HCT116 (cell line): ENCODE measurements at regions of chr2 and their contacts with region 1.

Region 1: DNA sequence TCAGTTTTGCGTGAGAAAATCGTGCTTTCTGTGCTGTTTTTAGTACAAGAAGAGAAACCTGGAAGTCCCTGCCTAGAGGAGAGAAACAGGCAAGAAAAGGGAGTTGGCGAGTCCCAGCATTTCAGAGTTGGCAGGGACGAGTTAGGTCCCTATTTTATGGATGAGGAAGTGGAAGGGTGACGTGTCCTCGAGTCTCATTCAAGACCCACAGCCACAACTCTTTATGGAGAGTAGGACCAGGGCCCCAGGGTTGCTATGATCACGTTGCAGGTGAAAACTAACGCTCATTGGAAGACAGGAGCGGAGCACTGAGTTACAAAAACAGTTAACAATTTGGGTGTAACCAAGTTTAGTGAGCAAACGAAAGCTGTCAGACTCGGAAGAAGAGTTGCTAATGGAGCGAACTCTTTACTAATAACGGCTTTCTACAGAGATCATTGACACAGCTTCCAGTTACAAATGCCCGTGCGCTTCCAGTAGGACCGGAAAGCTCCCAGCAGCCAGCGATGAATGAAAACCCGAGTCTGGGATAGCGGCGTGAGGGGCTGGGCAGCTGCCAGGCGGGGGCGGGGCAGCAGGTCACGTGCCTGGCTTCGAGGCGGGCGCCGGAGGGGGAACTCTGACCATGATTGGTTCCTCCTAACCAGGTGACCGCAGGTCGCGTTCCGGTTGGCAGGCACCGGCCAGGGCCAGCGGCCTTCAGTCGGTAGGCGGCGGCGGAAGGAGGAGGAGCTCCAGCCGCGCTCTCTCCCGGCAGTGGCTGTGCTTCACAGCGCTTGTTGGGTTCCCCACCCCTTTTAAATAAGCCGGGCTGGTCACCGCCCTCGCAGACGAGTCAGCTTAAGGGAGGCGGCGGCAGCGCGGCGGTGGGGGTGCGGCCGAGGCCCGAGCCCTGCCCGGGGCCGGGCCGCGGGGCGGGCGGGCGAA is at the start of gene CCNYL1:
- DNase-seq: peak; percentile 97
- ATAC-seq: peak; percentile 98
- H3K4me3 ChIP-seq: peak within 1 kb of the TSS; percentile 82 to 90
- H3K27ac ChIP-seq: peak within 1 kb of the TSS; percentile 68
- H3K4me1 ChIP-seq: peaks cover 4 to 19% of the 10 kb centered on the region in 2 experiments; a peak in 3 of 4 replicates
- H3K27me3 ChIP-seq: no peaks in the 10 kb centered on the region
- CTCF ChIP-seq: no peak
- POLR2A ChIP-seq: peak; percentile 58
- RAD21 ChIP-seq: no peak
- total RNA-seq, gene CCNYL1: 14.9 TPM

Region 2: GRCh38 chr2:207676827-207677354 is 34.2 kb before region 1 on chr2:
- CTCF ChIA-PET with region 1: no interaction called
- POLR2A ChIA-PET with region 1: no interaction called
- RAD21 ChIA-PET with region 1: no interaction called
- intact Hi-C with region 1: no loop called
- DNase-seq: no peak
- ATAC-seq: peak; percentile 60; the same call in 1 of the 2 replicates
- H3K4me3 ChIP-seq: no peak overlapping the region
- H3K27ac ChIP-seq: no peak overlapping the region
- H3K4me1 ChIP-seq: peaks cover 6 to 9% of the 10 kb centered on the region in 2 experiments; a peak in 3 of 4 replicates
- H3K27me3 ChIP-seq: no peaks in the 10 kb centered on the region
- CTCF ChIP-seq: no peak
- POLR2A ChIP-seq: no peak
- RAD21 ChIP-seq: no peak

Region 3: DNA sequence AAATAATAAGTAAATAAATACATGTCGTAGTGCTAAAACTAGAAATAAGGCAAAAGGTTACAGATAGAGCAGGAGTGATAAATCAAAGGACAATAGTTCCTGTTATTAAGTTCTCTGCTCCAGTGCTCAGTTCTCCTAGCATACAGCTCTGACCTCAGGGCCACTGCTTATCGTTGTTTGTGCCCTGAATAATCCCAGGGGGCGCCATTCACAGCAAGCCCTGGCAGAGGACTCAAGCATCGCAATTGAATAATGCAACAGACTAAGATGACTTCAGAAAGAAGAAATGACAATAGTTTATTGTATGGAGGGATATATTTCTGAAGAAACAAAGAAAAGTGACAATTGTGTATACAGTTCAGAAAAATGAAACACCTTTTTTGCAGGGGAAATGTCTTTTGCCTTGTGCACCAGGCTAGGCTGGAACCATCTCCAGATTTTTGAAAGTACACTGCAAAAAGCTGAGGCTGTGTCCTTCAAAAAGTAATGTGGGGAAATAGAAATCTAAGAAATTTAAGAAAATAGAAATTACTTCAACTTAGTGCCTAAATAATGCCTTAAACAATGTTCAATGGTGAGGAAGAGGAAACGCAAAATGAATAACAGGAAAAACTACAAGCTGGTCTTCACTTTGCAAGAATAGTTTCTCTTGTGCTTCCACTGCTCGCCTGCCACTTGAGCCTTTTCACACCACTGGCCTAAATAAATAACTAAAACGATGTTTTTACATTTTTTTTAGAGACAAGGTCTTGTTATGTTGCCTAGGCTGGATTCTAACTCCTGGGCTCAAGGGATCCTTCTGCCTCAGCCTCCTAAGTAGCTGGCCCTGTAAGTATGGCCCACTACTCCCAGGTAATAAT is 18.6 kb before region 1 on chr2:
- CTCF ChIA-PET with region 1: interaction called, 20 read pairs
- POLR2A ChIA-PET with region 1: interaction called, 7 read pairs
- RAD21 ChIA-PET with region 1: interaction called in 1 of 2 experiments, 3 read pairs
- intact Hi-C with region 1: no loop called
- DNase-seq: peak; percentile 46
- ATAC-seq: peak; percentile 97
- H3K4me3 ChIP-seq: no peak overlapping the region
- H3K27ac ChIP-seq: no peak overlapping the region
- H3K4me1 ChIP-seq: no peaks in the 10 kb centered on the region
- H3K27me3 ChIP-seq: no peaks in the 10 kb centered on the region
- CTCF ChIP-seq: peak; percentile 60 to 89 (median 75)
- POLR2A ChIP-seq: no peak
- RAD21 ChIP-seq: peak; percentile 66